ENCODE measurements at regions of chr21 and their contacts with region 1.

Region 1: DNA sequence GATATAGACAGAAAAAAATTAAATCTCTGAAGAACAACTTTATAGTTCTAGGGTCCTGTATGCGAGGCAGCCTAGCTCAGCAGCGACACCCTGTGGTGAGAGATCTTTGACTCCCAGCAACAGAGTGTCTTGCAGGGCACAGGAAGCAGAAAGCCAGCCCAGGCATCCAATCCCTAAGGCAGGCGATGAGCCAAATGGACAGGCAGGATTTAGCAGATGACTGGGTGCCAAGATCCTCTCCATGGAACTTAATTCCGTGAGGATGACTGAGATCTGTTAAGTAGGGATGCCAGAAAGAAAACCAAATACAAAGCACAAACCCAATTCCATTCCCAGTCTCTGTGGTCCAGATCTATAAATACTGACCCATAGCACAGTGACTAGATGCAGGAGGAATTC is 38.8 kb downstream of the HLCS start:
- DNase-seq: peak; percentile 58 to 90
- H3K4me3 ChIP-seq: no peak overlapping the region
- H3K4me1 ChIP-seq: no peaks in the 10 kb centered on the region
- H3K27me3 ChIP-seq: no peaks in the 10 kb centered on the region

Region 2: DNA sequence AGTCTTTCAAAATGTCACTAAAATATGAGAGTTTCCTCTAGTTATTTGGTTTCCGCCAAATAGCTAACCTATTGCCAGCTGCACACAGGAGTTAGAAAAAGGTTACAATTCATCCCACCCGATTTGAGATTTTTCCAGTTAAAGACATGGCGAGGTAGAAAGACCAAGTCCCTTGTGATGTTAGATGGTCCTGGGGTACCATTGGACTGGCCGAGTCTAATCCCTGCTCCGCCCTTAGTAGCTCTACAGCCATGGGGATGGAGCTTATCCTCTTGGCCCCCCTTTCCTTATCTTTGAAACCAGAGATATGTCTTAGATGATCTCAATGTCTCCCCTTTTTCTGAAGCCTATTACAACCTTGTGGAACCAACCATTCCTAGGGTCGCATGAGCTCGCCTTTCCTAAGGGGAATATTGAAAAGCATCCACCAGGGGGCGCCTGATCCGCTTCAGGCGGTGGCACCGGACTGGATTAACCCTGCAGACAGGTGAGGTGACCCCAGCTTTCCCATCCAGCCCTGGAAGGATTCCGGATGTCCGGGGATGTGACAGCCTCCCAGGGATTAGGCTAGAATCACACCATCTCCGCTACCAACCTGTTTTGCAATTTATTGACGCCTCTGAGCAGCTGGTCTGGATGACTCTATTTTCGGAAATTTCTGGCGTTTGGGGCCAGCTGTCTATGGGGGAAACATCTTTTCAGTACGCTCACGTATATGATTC is 297.1 kb before region 1 on chr21:
- in situ Hi-C with region 1: loop called (anchors 10 kb)
- DNase-seq: peak; percentile 38 to 86
- H3K4me3 ChIP-seq: no peak overlapping the region
- H3K4me1 ChIP-seq: no peaks in the 10 kb centered on the region
- H3K27me3 ChIP-seq: no peaks in the 10 kb centered on the region; the same call in 1 of the 2 replicates

Measured in HAP-1 (cell line).